Right lobe of liver (tissue), 6 donors: ENCODE measurements at regions of chr6 and their contacts with region 1.

Region 1: GRCh38 chr6:13908955-13909381 is 15.8 kb upstream of the RNF182 start:
- DNase-seq: no peak
- ATAC-seq: peak; percentile 85 to 94 (median 87)
- H3K4me3 ChIP-seq: no peak overlapping the region
- H3K27ac ChIP-seq: no peak overlapping the region
- H3K4me1 ChIP-seq: no peaks in the 10 kb centered on the region
- H3K27me3 ChIP-seq: no peaks in the 10 kb centered on the region
- CTCF ChIP-seq: peak; percentile 81 to 87 (median 83)
- POLR2A ChIP-seq: no peak

Region 2: DNA sequence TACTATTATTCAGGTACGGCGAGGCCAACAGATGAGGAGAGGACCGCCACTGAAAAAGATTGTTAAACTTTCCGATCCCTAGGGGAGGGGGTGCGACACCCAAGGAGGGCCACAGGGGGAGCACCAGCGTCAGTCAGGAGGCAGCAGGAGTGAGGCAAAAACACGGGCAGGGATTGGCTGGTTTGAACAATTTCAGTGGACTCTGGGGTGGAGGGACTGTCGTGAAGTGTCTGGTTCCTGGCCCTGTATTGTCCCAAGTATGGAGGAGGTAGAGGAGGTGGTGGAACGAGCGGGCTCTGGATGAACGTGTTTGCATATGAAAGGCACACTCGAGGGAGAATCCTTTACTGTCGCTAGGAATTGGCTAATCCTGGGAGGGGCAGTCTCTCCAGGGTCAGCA is 62.1 kb before region 1 on chr6:
- intact Hi-C with region 1: no loop called
- DNase-seq: no peak
- ATAC-seq: no peak
- H3K4me3 ChIP-seq: no peak overlapping the region
- H3K27ac ChIP-seq: no peak overlapping the region
- H3K4me1 ChIP-seq: no peaks in the 10 kb centered on the region
- H3K27me3 ChIP-seq: no peaks in the 10 kb centered on the region
- CTCF ChIP-seq: no peak
- POLR2A ChIP-seq: no peak

Region 3: GRCh38 chr6:14016935-14017625 is 108.1 kb after region 1 on chr6:
- intact Hi-C with region 1: no loop called
- DNase-seq: no peak
- ATAC-seq: no peak
- H3K4me3 ChIP-seq: no peak overlapping the region
- H3K27ac ChIP-seq: no peak overlapping the region
- H3K4me1 ChIP-seq: no peaks in the 10 kb centered on the region
- H3K27me3 ChIP-seq: no peaks in the 10 kb centered on the region
- CTCF ChIP-seq: no peak
- POLR2A ChIP-seq: no peak

Region 4: DNA sequence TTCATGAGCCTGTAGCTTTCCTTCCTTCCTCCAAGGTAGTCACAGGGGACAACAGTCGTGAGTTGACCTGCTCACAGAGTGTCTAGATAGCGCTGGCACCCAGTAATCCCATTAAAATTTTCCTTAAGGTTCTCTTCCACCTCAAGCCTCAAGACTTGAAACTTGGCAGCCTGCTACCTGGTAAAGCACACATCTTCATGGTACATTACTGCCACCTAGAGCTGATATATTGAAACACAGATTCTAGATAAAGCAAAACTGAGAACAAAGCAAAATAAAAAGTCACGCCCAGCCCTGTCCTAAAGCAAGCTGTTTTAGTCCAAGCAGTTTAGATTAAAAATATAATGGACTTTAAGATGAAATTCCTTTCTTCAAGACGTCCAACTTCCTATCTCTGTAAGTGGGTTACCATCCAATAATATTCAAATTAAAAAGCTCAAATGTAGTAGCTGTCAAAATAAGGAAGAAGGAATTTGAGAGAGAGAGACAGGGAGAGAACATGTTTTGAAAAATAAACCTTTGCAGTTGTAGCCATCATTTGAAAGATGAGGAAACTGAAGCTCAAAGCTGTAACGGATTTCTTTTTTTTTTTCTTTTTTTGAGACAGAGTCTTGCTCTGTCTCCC is 157.9 kb after region 1 on chr6:
- intact Hi-C with region 1: loop called in 1 of 2 experiments (anchors 10 kb)
- DNase-seq: no peak
- ATAC-seq: peak; percentile 81 to 85 (median 84)
- H3K4me3 ChIP-seq: no peak overlapping the region
- H3K27ac ChIP-seq: no peak overlapping the region
- H3K4me1 ChIP-seq: peaks cover 0 to 8% (median 4%) of the 10 kb centered on the region in 4 donors
- H3K27me3 ChIP-seq: no peaks in the 10 kb centered on the region
- CTCF ChIP-seq: peak; percentile 58 to 72 (median 62)
- POLR2A ChIP-seq: no peak

Region 5: DNA sequence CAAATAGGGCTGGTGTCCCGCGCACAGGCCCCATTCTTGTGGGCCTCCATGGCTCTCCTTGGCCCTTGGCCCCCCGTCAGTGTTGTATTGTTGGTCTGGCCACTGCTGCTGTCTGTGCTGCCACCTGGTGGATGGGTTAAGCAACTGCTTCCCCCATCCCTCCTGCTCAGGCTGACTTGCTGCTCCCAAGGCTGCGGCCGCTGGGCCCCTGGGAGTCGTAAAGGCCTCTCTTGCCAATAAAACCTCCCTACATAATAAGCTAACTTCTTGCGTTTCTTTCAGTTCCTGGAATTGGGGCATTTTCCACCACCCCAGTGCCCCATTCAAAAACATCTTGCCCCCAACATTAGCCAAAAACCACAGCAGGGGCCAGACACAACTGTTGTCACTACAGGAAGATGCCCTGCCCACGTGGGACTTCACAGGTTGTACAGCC is 235.7 kb after region 1 on chr6:
- intact Hi-C with region 1: loop called in 1 of 2 experiments (anchors 10 kb)
- DNase-seq: peak; percentile 68 to 71 (median 69)
- ATAC-seq: peak; percentile 82 to 89 (median 87)
- H3K4me3 ChIP-seq: no peak overlapping the region
- H3K27ac ChIP-seq: no peak overlapping the region
- H3K4me1 ChIP-seq: peaks cover 0 to 9% (median 2%) of the 10 kb centered on the region in 4 donors
- H3K27me3 ChIP-seq: no peaks in the 10 kb centered on the region
- CTCF ChIP-seq: peak; percentile 86 to 96 (median 94)
- POLR2A ChIP-seq: no peak